Pancreas (tissue), 10 donors: ENCODE measurements at regions of chr14 and their contacts with region 1.

Region 1: DNA sequence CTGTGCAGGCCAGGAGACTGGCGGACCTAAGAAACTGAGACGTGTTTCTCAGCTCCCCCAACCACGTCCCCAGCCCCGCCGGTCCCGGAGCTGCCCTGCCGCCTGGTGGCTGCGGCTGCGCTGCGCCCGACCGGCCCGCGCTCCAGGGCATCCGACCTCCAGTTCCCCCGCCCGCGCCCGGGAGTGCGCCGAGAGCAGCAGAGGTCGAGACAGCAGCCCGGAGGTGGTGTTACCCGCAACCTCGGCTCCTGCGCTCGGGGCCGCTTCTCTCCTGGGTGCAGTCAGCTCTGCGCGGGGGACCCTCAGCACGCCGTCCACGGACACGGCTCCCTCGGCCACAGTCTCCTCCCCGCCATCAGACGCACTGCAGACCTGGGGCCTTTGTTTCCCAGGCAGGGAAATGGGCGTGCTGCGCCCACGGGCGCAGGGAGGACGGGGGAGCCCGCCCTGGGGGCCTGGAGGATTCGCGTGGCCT is 21.6 kb upstream of the GPR132 start:
- DNase-seq: peak; percentile 60 to 92 (median 72)
- ATAC-seq: peak; percentile 35 to 66 (median 56)
- H3K4me3 ChIP-seq: peak overlapping the region; percentile 7 to 41 (median 23)
- H3K27ac ChIP-seq: peak overlapping the region in 2 of 4 donors; percentile 11 to 21
- H3K4me1 ChIP-seq: peaks cover 13 to 22% (median 19%) of the 10 kb centered on the region in 3 donors
- H3K27me3 ChIP-seq: no peaks in the 10 kb centered on the region
- CTCF ChIP-seq: peak; percentile 60 to 77 (median 71)

Region 2: DNA sequence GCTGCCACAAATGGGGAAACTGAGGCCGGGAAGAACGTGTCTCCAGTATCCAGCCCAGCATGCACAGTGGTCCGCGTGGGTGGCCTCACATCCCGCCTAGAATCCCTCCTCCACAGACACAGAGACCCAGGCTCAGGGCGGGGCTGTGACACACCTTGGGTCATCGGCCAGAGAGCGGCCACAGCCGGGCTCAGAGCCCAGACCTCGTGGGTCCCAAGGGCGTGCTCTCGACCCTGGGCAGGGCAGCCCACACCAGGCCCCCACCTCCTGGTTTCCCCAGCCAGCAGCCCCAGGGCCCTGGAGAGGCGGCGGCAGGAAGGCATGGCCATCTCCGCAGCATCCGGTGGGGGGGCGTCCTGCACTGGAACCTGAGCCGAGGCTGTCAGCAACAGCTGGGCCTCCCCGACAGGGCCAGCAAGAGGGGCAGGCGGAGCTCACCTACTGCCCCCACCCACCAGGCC is 66.4 kb after region 1 on chr14:
- intact Hi-C with region 1: no loop called
- DNase-seq: peak in 3 of 6 donors; percentile 28 to 69 (median 49)
- ATAC-seq: peak in 1 of 4 donors; percentile 8
- H3K4me3 ChIP-seq: no peak overlapping the region
- H3K27ac ChIP-seq: no peak overlapping the region
- H3K4me1 ChIP-seq: no peaks in the 10 kb centered on the region
- H3K27me3 ChIP-seq: no peaks in the 10 kb centered on the region
- CTCF ChIP-seq: no peak

Region 3: GRCh38 chr14:105168979-105169507 is 82.2 kb after region 1 on chr14:
- intact Hi-C with region 1: loop called in 1 of 3 experiments (anchors 10 kb)
- DNase-seq: peak in 1 of 6 donors; percentile 37
- ATAC-seq: no peak
- H3K4me3 ChIP-seq: peak overlapping the region in 2 of 4 donors; percentile 23 to 48
- H3K27ac ChIP-seq: no peak overlapping the region
- H3K4me1 ChIP-seq: peaks cover 7 to 17% (median 13%) of the 10 kb centered on the region in 3 donors
- H3K27me3 ChIP-seq: no peaks in the 10 kb centered on the region
- CTCF ChIP-seq: no peak

Region 4: GRCh38 chr14:105187935-105188524 is 101.2 kb after region 1 on chr14:
- intact Hi-C with region 1: loop called in 1 of 3 experiments (anchors 5 kb)
- DNase-seq: peak in 4 of 6 donors; percentile 70 to 81 (median 76)
- ATAC-seq: peak; percentile 78 to 94 (median 80)
- H3K4me3 ChIP-seq: no peak overlapping the region
- H3K27ac ChIP-seq: no peak overlapping the region
- H3K4me1 ChIP-seq: no peaks in the 10 kb centered on the region
- H3K27me3 ChIP-seq: peaks cover 0 to 3% (median 0%) of the 10 kb centered on the region in 4 donors
- CTCF ChIP-seq: peak in 2 of 4 donors; percentile 10 to 15

Region 5: GRCh38 chr14:105255021-105255507 is 168.2 kb after region 1 on chr14:
- intact Hi-C with region 1: no loop called
- DNase-seq: no peak
- ATAC-seq: no peak
- H3K4me3 ChIP-seq: no peak overlapping the region
- H3K27ac ChIP-seq: no peak overlapping the region
- H3K4me1 ChIP-seq: peaks cover 0 to 10% (median 0%) of the 10 kb centered on the region in 3 donors
- H3K27me3 ChIP-seq: no peaks in the 10 kb centered on the region
- CTCF ChIP-seq: no peak

Region 6: GRCh38 chr14:105281371-105282097 is 194.7 kb after region 1 on chr14:
- intact Hi-C with region 1: loop called in 1 of 3 experiments (anchors 10 kb)
- DNase-seq: peak in 3 of 6 donors; percentile 41 to 54 (median 50)
- ATAC-seq: peak; percentile 69 to 88 (median 78)
- H3K4me3 ChIP-seq: no peak overlapping the region
- H3K27ac ChIP-seq: peak overlapping the region; percentile 10 to 55 (median 34)
- H3K4me1 ChIP-seq: peaks cover 16 to 24% (median 22%) of the 10 kb centered on the region in 3 donors
- H3K27me3 ChIP-seq: no peaks in the 10 kb centered on the region
- CTCF ChIP-seq: peak; percentile 17 to 43 (median 37)

Region 7: GRCh38 chr14:105351920-105352851 is 265.3 kb after region 1 on chr14:
- intact Hi-C with region 1: loop called in 1 of 3 experiments (anchors 5 kb)
- DNase-seq: peak; percentile 83 to 94 (median 89)
- ATAC-seq: peak; percentile 97 to 99 (median 98)
- H3K4me3 ChIP-seq: no peak overlapping the region
- H3K27ac ChIP-seq: peak overlapping the region in 1 of 4 donors; percentile 30
- H3K4me1 ChIP-seq: no peaks in the 10 kb centered on the region
- H3K27me3 ChIP-seq: no peaks in the 10 kb centered on the region
- CTCF ChIP-seq: peak; percentile 65 to 92 (median 76)